A549 (cell line): ENCODE measurements at regions of chr7 and their contacts with region 1.

Region 1: DNA sequence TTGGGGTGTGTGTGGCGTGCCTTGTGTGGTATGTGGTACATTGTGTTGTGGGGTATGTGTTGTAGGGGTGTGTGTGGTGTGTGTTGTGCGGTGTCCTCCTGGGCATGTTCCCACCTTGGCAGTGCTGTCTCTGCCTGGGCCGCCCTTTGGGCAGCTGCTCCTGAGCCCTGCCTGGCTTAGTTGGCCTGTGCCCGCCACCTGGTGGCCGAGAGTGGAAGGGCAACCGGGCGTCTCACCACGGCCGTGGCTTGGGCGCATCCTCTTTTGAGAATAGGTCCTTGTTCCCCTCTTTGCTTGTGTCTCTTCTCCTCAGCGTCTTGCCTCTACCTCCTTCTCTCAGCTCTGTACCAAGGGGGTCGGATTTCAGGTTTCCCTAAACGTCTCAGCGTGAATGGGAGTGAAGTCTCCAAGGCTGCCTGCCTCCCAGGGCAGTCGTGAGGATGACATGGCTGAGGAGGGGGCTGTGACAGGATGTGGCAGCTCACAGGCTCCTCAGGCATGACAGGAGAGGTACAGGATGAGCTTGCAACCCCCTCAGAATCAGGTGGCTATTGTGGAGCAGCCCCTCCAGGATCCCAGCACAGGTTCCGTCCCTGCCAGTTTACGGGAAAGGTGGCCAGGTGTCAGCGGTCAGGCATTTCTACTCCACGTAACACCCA is 98.4 kb upstream of the PODXL start:
- DNase-seq: peak; percentile 87 to 89
- ATAC-seq: peak; percentile 91 to 97
- H3K4me3 ChIP-seq: no peak overlapping the region
- H3K27ac ChIP-seq: peak overlapping the region; percentile 61 to 71; a peak in 3 of 6 replicates
- H3K4me1 ChIP-seq: peaks cover 15% of the 10 kb centered on the region
- CTCF ChIP-seq: peak; percentile 74
- EP300 ChIP-seq: no peak
- POLR2A ChIP-seq: no peak
- RAD21 ChIP-seq: peak; percentile 93 to 98

Region 2: DNA sequence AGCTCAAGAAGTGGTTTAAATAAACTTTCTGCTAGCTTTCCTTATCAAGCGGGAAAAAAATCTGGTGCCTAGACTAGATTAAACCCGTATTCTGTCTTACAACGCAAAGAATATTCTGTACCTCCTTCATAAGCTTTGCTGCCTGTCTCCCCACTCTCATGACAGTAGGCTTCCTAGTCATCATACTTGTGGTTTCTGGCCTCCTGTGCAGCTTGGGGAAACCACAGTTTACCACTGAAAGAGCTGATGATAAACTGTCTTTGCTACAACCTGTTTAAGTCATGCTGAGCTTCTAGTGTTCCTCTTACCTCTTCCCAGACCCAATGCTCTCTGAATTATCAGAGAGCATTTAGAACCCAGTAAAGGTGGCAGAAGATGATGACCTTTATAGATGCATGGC is 153.4 kb before region 1 on chr7:
- CTCF ChIA-PET with region 1: interaction called, 212 read pairs
- POLR2A ChIA-PET with region 1: no interaction called
- DNase-seq: no peak
- ATAC-seq: no peak
- H3K4me3 ChIP-seq: no peak overlapping the region
- H3K27ac ChIP-seq: no peak overlapping the region
- H3K4me1 ChIP-seq: peaks cover 17% of the 10 kb centered on the region
- CTCF ChIP-seq: no peak
- EP300 ChIP-seq: no peak
- POLR2A ChIP-seq: no peak
- RAD21 ChIP-seq: no peak

Region 3: GRCh38 chr7:131521651-131522163 is 133.1 kb before region 1 on chr7:
- CTCF ChIA-PET with region 1: interaction called, 212 read pairs
- POLR2A ChIA-PET with region 1: no interaction called
- DNase-seq: peak in 1 of 2 experiments; percentile 67
- ATAC-seq: peak; percentile 70 to 85
- H3K4me3 ChIP-seq: no peak overlapping the region
- H3K27ac ChIP-seq: peak overlapping the region; percentile 52 to 75; a peak in 4 of 6 replicates
- H3K4me1 ChIP-seq: peaks cover 25% of the 10 kb centered on the region
- CTCF ChIP-seq: no peak
- EP300 ChIP-seq: no peak
- POLR2A ChIP-seq: no peak
- RAD21 ChIP-seq: no peak

Region 4: DNA sequence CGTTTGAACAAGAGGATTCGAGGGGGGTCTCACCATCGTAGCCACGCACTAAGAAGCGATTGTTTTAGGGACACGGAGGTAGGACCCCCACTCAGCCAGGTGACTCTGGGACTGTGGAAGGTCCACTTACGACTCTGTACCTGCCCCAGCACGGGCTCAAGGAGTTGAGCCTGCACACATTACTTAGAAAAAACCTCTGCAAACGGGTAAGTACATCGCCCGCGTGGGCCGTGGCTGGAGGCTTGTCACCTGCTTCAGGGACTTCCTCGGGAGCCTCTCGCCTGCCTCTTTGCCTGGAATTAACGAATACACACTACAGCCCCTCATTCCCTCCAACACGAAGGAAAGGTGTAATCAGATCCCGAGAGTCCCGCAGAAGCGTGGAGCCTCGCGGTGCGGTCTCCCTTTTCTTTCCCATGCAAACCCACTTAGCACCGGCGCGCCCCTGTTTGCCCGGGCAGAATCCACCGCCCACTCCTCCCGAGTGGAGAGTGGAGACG is 99.2 kb before region 1 on chr7:
- CTCF ChIA-PET with region 1: interaction called, 99 read pairs
- POLR2A ChIA-PET with region 1: no interaction called
- DNase-seq: no peak
- ATAC-seq: peak in 1 of 2 experiments; percentile 10; a peak in 3 of 6 replicates
- H3K4me3 ChIP-seq: peak overlapping the region; percentile 60
- H3K27ac ChIP-seq: peak overlapping the region; percentile 81 to 93
- H3K4me1 ChIP-seq: peaks cover 13% of the 10 kb centered on the region; the same call in 2 of the 3 replicates
- CTCF ChIP-seq: no peak
- EP300 ChIP-seq: no peak
- POLR2A ChIP-seq: no peak
- RAD21 ChIP-seq: no peak

Region 5: DNA sequence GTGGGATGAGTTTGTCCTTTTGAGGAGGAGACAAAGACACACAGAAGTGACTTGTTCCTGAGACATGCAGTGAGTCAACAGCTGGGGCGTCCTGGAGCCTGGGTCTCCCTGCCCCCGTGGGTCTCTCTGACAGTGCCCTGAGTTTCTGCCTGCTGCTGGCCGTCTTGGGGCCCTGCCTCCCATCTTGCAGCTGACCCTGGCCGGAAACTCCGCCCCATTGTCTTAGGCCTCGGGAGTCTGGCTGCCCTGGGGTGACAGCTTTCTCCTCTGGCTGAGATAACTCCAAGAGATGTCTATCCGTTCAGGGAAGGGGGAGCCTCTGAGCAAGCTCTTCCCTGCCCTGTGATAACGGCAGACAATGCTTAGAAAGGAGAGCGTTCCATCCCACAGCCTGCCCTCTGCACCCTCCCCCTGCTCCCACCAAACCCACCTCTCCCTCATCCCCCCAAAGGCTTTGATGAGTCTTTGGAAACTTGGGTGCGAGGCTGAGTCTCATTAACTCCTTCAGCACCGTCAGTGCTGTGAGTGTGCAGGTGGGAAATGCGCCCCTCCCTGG is 28.9 kb before region 1 on chr7:
- CTCF ChIA-PET with region 1: interaction called, 30 read pairs
- POLR2A ChIA-PET with region 1: interaction called, 3 read pairs
- DNase-seq: peak; percentile 87
- ATAC-seq: peak; percentile 87 to 90
- H3K4me3 ChIP-seq: 0 out of 3 replicates have a peak overlapping the region, but pooled peaks have one; percentile 14
- H3K27ac ChIP-seq: peak overlapping the region; percentile 76 to 82
- H3K4me1 ChIP-seq: peaks cover 62% of the 10 kb centered on the region
- CTCF ChIP-seq: 0 out of 3 replicates have a peak, but pooled peaks have one; percentile 10
- EP300 ChIP-seq: peak in 1 of 2 experiments; percentile 40; a peak in 1 of 5 replicates
- POLR2A ChIP-seq: no peak
- RAD21 ChIP-seq: peak in 1 of 2 experiments; percentile 27; a peak in 3 of 5 replicates

Region 6: DNA sequence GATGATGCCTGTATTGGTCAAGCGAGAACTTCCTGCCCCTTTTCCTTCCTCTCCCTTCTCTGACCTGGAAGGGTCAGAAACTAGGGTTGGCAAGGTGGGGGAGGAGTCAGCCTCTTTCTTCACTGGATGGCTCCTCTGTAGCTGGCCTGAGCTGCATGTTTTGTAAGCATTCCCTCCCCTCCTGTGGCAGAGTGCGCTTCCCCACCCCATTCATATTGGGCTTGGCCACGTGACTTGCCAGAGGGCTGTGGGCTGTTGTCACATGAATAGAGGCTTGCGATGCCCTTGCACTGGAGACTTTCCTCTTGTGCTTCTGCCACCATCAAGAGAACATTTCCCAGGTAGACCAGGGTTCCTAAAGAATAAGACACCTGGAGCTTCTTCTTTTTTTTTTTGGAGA is 12.9 kb after region 1 on chr7:
- CTCF ChIA-PET with region 1: interaction called, 10 read pairs
- POLR2A ChIA-PET with region 1: no interaction called
- DNase-seq: no peak
- ATAC-seq: no peak
- H3K4me3 ChIP-seq: no peak overlapping the region
- H3K27ac ChIP-seq: no peak overlapping the region
- H3K4me1 ChIP-seq: no peaks in the 10 kb centered on the region
- CTCF ChIP-seq: no peak
- EP300 ChIP-seq: no peak
- POLR2A ChIP-seq: no peak
- RAD21 ChIP-seq: no peak